ENCODE measurements at regions of chr19 and their contacts with region 1.

Region 1: DNA sequence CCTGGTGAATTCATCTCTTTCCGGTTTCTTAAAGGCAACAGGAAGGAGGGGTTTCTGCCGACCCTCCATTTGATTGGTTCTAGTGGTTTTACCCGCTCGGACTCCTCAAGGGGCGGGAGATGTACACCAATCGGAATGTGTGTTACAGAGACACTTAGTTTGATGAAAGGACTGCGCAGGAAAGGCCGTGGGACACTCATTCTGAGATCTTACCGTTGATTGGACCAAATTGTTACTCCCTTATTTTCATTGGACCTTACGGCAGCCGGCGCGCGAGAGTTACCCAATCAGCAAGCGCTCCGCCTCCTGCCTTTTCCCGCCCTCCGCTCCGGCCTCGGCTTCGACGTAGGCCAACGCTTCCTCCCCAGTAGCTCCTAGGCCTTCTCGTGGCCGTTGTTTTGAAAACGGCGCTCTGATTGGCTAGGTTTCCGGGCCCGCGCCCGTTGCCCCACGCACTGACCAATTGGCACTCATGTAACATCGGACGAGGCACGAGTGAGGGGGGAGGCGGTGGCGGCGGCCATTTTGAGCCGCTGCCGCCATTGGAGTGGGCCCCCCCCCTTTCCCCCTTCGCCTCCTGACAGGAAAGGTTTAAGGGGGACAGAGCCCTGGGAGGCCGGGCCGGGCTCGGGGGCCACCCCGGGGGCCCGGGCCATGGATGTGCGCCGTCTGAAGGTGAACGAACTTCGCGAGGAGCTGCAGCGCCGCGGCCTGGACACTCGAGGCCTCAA is at the start of gene HNRNPUL1:
- DNase-seq: peak; percentile 99 to 100 (median 100)
- ATAC-seq: peak; percentile 50
- H3K4me3 ChIP-seq: peak within 1 kb of the TSS; percentile 85
- H3K4me3 Mint-ChIP-seq: peak within 1 kb of the TSS; percentile 96
- H3K27ac ChIP-seq: peak within 1 kb of the TSS; percentile 99 to 100
- H3K27ac Mint-ChIP-seq: peak within 1 kb of the TSS; percentile 100
- H3K4me1 ChIP-seq: peaks cover 59% of the 10 kb centered on the region
- H3K4me1 Mint-ChIP-seq: peaks cover 55% of the 10 kb centered on the region
- H3K27me3 ChIP-seq: no peaks in the 10 kb centered on the region
- H3K27me3 Mint-ChIP-seq: peaks cover 5% of the 10 kb centered on the region
- CTCF ChIP-seq: no peak
- total RNA-seq, gene HNRNPUL1: 367 to 388 TPM

Region 2: GRCh38 chr19:40331069-40331468 is 932.9 kb before region 1 on chr19:
- CTCF ChIA-PET with region 1: no interaction called
- POLR2A ChIA-PET with region 1: no interaction called
- intact Hi-C with region 1: no loop called
- DNase-seq: no peak
- ATAC-seq: no peak
- H3K4me3 ChIP-seq: no peak overlapping the region
- H3K4me3 Mint-ChIP-seq: no peak overlapping the region
- H3K27ac ChIP-seq: no peak overlapping the region
- H3K27ac Mint-ChIP-seq: no peak overlapping the region
- H3K4me1 ChIP-seq: no peaks in the 10 kb centered on the region
- H3K4me1 Mint-ChIP-seq: no peaks in the 10 kb centered on the region
- H3K27me3 ChIP-seq: no peaks in the 10 kb centered on the region
- H3K27me3 Mint-ChIP-seq: no peaks in the 10 kb centered on the region
- CTCF ChIP-seq: no peak

Region 3: GRCh38 chr19:40662921-40663694 is 600.9 kb before region 1 on chr19:
- CTCF ChIA-PET with region 1: interaction called, 4 read pairs
- POLR2A ChIA-PET with region 1: interaction called, 14 read pairs
- intact Hi-C with region 1: loop called in 1 of 2 experiments (anchors 1 kb)
- DNase-seq: peak; percentile 85 to 98 (median 94)
- ATAC-seq: peak; percentile 89
- H3K4me3 ChIP-seq: peak overlapping the region; percentile 56
- H3K4me3 Mint-ChIP-seq: peak overlapping the region; percentile 91
- H3K27ac ChIP-seq: peak overlapping the region; percentile 35 to 53
- H3K27ac Mint-ChIP-seq: peak overlapping the region; percentile 74
- H3K4me1 ChIP-seq: peaks cover 15% of the 10 kb centered on the region
- H3K4me1 Mint-ChIP-seq: peaks cover 19% of the 10 kb centered on the region
- H3K27me3 ChIP-seq: no peaks in the 10 kb centered on the region
- H3K27me3 Mint-ChIP-seq: no peaks in the 10 kb centered on the region
- CTCF ChIP-seq: peak; percentile 90

Region 4: GRCh38 chr19:40798223-40798996 is 465.6 kb before region 1 on chr19:
- CTCF ChIA-PET with region 1: no interaction called
- POLR2A ChIA-PET with region 1: interaction called, 12 read pairs
- intact Hi-C with region 1: no loop called
- DNase-seq: peak; percentile 100
- ATAC-seq: peak; percentile 78
- H3K4me3 ChIP-seq: peak overlapping the region; percentile 64
- H3K4me3 Mint-ChIP-seq: peak overlapping the region; percentile 92
- H3K27ac ChIP-seq: peak overlapping the region; percentile 88 to 96
- H3K27ac Mint-ChIP-seq: peak overlapping the region; percentile 98
- H3K4me1 ChIP-seq: peaks cover 47% of the 10 kb centered on the region
- H3K4me1 Mint-ChIP-seq: peaks cover 45% of the 10 kb centered on the region
- H3K27me3 ChIP-seq: no peaks in the 10 kb centered on the region
- H3K27me3 Mint-ChIP-seq: no peaks in the 10 kb centered on the region
- CTCF ChIP-seq: peak; percentile 40

Region 5: GRCh38 chr19:41133260-41133659 is 130.8 kb before region 1 on chr19:
- CTCF ChIA-PET with region 1: no interaction called
- POLR2A ChIA-PET with region 1: no interaction called
- intact Hi-C with region 1: loop called in 1 of 2 experiments (anchors 5 kb)
- DNase-seq: no peak
- ATAC-seq: no peak
- H3K4me3 ChIP-seq: no peak overlapping the region
- H3K4me3 Mint-ChIP-seq: peak overlapping the region; percentile 79
- H3K27ac ChIP-seq: no peak overlapping the region
- H3K27ac Mint-ChIP-seq: no peak overlapping the region
- H3K4me1 ChIP-seq: peaks cover 25% of the 10 kb centered on the region
- H3K4me1 Mint-ChIP-seq: peaks cover 16% of the 10 kb centered on the region
- H3K27me3 ChIP-seq: no peaks in the 10 kb centered on the region
- H3K27me3 Mint-ChIP-seq: no peaks in the 10 kb centered on the region
- CTCF ChIP-seq: no peak

Region 6: DNA sequence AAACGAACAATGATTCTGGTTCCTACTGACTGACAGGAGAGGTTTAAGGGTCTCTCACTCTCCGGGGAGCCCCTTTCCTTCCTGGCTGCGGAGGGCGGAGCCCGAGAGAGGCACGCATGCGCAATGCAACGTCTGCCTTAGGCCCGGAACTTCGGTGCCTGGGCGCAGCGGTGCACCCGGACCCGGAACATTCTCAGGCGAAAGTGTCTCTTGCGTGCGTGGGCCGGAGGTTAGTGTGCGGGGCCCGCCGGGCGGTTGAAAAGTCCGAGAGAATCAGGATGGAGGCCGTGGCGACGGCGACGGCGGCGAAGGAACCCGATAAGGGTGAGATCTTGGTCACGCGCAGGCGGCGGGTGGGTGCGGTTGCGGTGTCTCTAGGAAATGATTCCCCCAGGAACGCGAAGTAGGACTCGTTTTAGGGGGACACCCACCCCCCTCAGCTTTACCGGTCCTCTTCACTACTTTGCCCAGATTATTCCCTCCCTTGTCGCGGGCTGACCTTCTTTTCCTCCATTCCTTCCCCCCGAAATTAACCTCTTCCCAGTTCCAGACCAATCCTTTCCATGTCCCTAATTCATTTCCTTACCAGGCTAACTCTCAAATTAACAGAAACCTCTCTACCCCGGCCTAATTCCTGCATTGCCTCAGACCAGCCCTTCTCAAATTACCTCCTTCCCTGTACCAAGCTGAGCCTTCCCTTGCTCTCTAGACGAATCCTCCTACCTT is 46.2 kb after region 1 on chr19 and contains the start of gene CCDC97:
- CTCF ChIA-PET with region 1: interaction called, 43 read pairs
- POLR2A ChIA-PET with region 1: interaction called, 314 read pairs
- intact Hi-C with region 1: loop called (anchors 1 kb)
- DNase-seq: peak; percentile 80 to 94 (median 88)
- ATAC-seq: peak; percentile 55
- H3K4me3 ChIP-seq: peak within 1 kb of the TSS; percentile 64
- H3K4me3 Mint-ChIP-seq: peak within 1 kb of the TSS; percentile 95
- H3K27ac ChIP-seq: peak within 1 kb of the TSS; percentile 95 to 97
- H3K27ac Mint-ChIP-seq: peak within 1 kb of the TSS; percentile 97
- H3K4me1 ChIP-seq: peaks cover 80% of the 10 kb centered on the region
- H3K4me1 Mint-ChIP-seq: peaks cover 80% of the 10 kb centered on the region
- H3K27me3 ChIP-seq: no peaks in the 10 kb centered on the region
- H3K27me3 Mint-ChIP-seq: no peaks in the 10 kb centered on the region
- CTCF ChIP-seq: no peak
- total RNA-seq, gene CCDC97: 27.3 to 29.7 TPM

Region 7: DNA sequence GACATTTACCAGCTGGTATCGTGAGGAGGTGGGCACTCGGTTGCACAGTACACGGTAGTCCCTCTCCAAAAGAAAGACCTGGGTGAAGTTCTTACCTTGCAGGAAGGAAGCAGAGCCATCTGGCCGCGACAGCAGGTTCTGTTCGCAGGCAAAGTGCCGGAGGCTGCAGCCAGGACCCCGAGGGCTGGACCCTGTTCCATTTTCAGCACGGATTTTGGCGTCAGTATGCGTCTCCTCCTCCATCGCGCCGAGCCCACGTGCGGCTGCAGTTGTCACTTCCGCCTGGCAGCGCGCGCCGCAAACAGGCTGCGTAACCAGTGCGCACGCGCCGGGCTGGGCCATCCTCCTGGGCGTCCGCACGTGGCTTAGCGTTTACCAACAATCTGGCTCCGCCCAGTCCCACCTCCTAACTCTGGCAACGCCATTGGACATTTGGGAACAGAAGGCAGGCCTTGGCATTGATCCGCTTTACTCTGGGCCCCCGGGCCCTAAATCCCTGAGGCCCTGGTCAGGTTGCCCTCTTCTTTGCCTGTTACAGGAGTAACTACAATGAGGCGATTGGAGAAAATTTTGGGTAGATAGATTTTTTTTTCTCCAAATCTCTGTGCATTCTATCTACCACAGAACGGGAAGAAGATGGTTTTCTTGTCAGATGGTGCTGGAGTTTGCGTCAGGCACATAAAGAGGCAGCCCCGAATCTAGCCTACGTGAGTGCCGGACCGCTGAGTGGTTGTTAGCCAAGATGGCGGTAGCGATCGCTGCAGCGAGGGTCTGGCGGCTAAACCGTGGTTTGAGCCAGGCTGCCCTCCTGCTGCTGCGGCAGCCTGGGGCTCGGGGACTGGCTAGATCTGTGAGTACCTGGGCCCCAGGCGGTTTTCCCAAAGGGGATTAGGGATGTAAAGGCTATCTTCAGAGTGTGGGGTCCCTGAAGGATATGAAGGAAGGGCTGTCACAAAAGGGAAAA is 133.4 kb after region 1 on chr19 and contains the starts of genes BCKDHA and EXOSC5:
- CTCF ChIA-PET with region 1: interaction called, 3 read pairs
- POLR2A ChIA-PET with region 1: interaction called, 4 read pairs
- intact Hi-C with region 1: loop called in 1 of 2 experiments (anchors 1 kb)
- DNase-seq: peak; percentile 97 to 100 (median 99)
- ATAC-seq: peak; percentile 98
- H3K4me3 ChIP-seq: peak within 1 kb of the TSS; percentile 82
- H3K4me3 Mint-ChIP-seq: peak within 1 kb of the TSS; percentile 96
- H3K27ac ChIP-seq: peak within 1 kb of the TSS; percentile 91 to 99
- H3K27ac Mint-ChIP-seq: peak within 1 kb of the TSS; percentile 99
- H3K4me1 ChIP-seq: peaks cover 38% of the 10 kb centered on the region
- H3K4me1 Mint-ChIP-seq: peaks cover 57% of the 10 kb centered on the region
- H3K27me3 ChIP-seq: no peaks in the 10 kb centered on the region
- H3K27me3 Mint-ChIP-seq: no peaks in the 10 kb centered on the region
- CTCF ChIP-seq: no peak
- total RNA-seq, gene BCKDHA: 12.2 to 13.1 TPM
- total RNA-seq, gene EXOSC5: 6.5 to 7.5 TPM

Region 8: GRCh38 chr19:41554907-41555306 is 290.9 kb after region 1 on chr19:
- CTCF ChIA-PET with region 1: interaction called, 5 read pairs
- POLR2A ChIA-PET with region 1: interaction called, 15 read pairs
- intact Hi-C with region 1: no loop called
- DNase-seq: peak in 6 of 14 experiments; percentile 32 to 84 (median 70)
- ATAC-seq: peak; percentile 72
- H3K4me3 ChIP-seq: peak overlapping the region; percentile 74
- H3K4me3 Mint-ChIP-seq: peak overlapping the region; percentile 97
- H3K27ac ChIP-seq: peak overlapping the region; percentile 42 to 63
- H3K27ac Mint-ChIP-seq: peak overlapping the region; percentile 82
- H3K4me1 ChIP-seq: peaks cover 37% of the 10 kb centered on the region
- H3K4me1 Mint-ChIP-seq: peaks cover 75% of the 10 kb centered on the region
- H3K27me3 ChIP-seq: no peaks in the 10 kb centered on the region
- H3K27me3 Mint-ChIP-seq: no peaks in the 10 kb centered on the region
- CTCF ChIP-seq: no peak

Measured in CD4-positive, alpha-beta T cell (primary cell).